ENCODE measurements at regions of chr15 and their contacts with region 1.

Region 1: GRCh38 chr15:41660235-41661077 is at the start of gene MGA:
- DNase-seq: peak; percentile 96
- ATAC-seq: peak; percentile 94
- total RNA-seq, gene MGA: 25.0 TPM

Region 2: GRCh38 chr15:41621200-41622193 is 39.0 kb before region 1 on chr15:
- intact Hi-C with region 1: loop called (anchors 5 kb)
- DNase-seq: peak; percentile 86
- ATAC-seq: peak; percentile 91

Region 3: DNA sequence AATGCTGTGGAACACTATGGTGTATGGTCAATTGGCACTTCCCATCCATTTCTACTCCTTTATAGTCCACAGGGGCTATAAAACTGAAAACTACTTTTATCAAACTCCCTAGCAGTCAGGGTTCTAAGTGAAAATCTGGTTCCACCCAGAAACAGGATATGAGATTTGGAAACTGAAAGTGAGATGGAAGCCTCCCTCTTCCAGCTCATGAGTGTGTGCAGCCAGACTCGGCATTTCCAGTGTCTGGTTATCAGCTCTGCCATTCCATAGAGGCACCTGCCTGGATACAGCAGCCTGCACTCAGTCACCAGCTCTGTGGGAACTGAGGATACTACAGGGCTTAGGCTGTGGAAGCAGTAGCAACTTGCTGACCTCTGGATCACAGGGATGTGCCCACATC is 510.7 kb after region 1 on chr15:
- intact Hi-C with region 1: no loop called
- DNase-seq: no peak
- ATAC-seq: peak; percentile 20